Posterior cingulate gyrus (tissue), 11 donors: ENCODE measurements at regions of chr1 and their contacts with region 1.

Region 1: DNA sequence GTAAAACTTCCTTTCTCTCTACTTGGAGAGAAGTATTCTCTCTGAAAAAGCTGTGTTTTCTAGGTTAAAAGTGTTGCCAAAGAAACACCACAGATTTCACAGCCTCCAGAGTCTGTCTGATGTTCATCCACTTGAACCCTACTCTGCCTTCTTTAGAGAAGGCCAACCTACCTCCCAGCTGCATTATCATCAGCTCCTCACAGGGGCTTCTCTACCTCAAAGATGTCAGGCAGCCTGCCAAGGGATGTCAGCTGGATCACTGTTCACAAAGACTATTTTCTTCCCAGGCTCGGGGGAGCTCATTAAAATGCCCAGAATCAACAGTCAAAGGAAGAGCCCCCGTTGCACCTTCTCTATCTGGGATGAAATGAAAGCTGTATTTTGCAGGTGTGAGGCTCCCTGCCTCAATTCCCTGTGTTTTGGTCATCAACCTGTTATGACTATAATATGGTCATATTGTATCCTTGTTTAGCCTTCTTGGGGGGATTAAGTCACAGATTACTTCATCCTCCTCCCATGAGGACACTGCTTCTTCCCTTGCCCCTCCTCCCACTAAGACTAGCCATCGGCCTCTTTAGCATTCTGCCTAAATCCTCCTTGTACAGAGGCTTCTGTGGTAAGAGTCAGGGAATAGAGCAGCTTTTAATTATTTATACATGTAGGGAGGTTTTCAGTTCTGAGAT is 25.7 kb downstream of the ANGPTL7 start:
- DNase-seq: no peak

Region 2: GRCh38 chr1:11072216-11072917 is 142.5 kb before region 1 on chr1:
- intact Hi-C with region 1: no loop called
- DNase-seq: peak in 2 of 10 donors; percentile 5 to 75

Region 3: GRCh38 chr1:11099310-11100149 is 115.3 kb before region 1 on chr1 and contains the start of gene EXOSC10:
- intact Hi-C with region 1: loop called (anchors 10 kb)
- DNase-seq: peak; percentile 89 to 99 (median 94)